Right cardiac atrium (tissue), 5 donors: ENCODE measurements at regions of chr9 and their contacts with region 1.

Region 1: GRCh38 chr9:123544007-123544827 is 188.2 kb downstream of the CRB2 start:
- DNase-seq: no peak
- ATAC-seq: no peak
- H3K4me3 ChIP-seq: no peak overlapping the region
- H3K27ac ChIP-seq: no peak overlapping the region
- H3K4me1 ChIP-seq: peaks cover 4% of the 10 kb centered on the region
- H3K27me3 ChIP-seq: no peaks in the 10 kb centered on the region

Region 2: GRCh38 chr9:123401879-123402513 is 142.2 kb before region 1 on chr9:
- intact Hi-C with region 1: loop called in 1 of 4 experiments (anchors 5 kb)
- DNase-seq: peak in 2 of 3 donors; percentile 3 to 56
- ATAC-seq: peak; percentile 75 to 77
- H3K4me3 ChIP-seq: no peak overlapping the region
- H3K27ac ChIP-seq: no peak overlapping the region
- H3K4me1 ChIP-seq: no peaks in the 10 kb centered on the region
- H3K27me3 ChIP-seq: no peaks in the 10 kb centered on the region

Region 3: GRCh38 chr9:123562844-123563346 is 18.7 kb after region 1 on chr9:
- intact Hi-C with region 1: no loop called
- DNase-seq: no peak
- ATAC-seq: no peak
- H3K4me3 ChIP-seq: no peak overlapping the region
- H3K27ac ChIP-seq: no peak overlapping the region
- H3K4me1 ChIP-seq: no peaks in the 10 kb centered on the region
- H3K27me3 ChIP-seq: no peaks in the 10 kb centered on the region

Region 4: DNA sequence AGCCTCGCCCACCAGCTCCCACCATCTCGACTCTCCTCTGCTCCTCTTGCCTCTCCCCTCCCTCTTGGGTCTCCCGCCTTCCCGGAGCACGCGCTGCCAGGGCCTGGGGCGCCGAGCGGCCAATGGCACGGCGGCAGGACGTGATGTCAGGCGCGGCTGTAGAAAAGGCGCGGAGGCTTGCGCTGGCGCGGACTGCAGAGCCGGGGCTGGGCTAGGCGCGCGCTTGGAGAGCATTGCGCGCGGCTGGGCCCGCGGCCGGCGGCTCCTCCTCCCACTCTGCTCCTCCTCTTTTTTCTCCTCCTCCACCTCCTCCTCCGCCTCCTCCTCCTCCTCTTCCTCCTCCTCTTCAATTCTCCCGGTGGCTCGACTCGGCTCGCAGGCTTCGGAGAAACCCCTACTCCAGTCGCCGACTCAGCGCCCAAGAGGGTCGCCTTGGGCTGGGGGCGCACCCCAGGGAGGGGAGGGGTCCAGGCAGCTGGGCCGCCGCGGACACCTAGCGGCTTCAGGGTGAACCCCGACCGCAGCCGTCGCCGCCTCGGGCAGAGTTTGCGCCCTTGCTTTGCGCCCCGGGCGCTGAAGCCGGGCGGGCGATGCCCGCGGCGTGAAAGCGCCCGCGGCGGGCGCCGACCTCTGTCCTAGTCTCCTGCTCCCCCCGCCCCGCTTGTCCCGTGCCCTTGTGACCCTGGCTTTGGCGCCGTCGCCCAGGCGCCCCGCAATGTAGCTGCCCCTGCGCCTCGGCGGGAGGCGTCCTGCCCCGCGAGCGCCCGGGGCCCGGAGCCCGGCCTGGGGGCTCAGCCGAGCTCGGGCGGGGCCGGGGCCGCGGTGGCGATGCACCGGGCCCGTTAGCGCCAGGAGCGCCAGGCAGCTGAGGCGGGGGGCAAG is 467.4 kb after region 1 on chr9 and contains the start of gene LHX2:
- intact Hi-C with region 1: loop called in 1 of 4 experiments (anchors 5 kb)
- DNase-seq: peak; percentile 75 to 90 (median 86)
- ATAC-seq: peak; percentile 88 to 91
- H3K4me3 ChIP-seq: peak within 1 kb of the TSS; percentile 46
- H3K27ac ChIP-seq: no peak within 1 kb of the TSS
- H3K4me1 ChIP-seq: peaks cover 8% of the 10 kb centered on the region
- H3K27me3 ChIP-seq: no peaks in the 10 kb centered on the region
- total RNA-seq, gene LHX2: 0.17 TPM in 1 of 4 donors, not detected in the others